CD4-positive, alpha-beta T cell (primary cell): ENCODE measurements at regions of chr12 and their contacts with region 1.

Region 1: DNA sequence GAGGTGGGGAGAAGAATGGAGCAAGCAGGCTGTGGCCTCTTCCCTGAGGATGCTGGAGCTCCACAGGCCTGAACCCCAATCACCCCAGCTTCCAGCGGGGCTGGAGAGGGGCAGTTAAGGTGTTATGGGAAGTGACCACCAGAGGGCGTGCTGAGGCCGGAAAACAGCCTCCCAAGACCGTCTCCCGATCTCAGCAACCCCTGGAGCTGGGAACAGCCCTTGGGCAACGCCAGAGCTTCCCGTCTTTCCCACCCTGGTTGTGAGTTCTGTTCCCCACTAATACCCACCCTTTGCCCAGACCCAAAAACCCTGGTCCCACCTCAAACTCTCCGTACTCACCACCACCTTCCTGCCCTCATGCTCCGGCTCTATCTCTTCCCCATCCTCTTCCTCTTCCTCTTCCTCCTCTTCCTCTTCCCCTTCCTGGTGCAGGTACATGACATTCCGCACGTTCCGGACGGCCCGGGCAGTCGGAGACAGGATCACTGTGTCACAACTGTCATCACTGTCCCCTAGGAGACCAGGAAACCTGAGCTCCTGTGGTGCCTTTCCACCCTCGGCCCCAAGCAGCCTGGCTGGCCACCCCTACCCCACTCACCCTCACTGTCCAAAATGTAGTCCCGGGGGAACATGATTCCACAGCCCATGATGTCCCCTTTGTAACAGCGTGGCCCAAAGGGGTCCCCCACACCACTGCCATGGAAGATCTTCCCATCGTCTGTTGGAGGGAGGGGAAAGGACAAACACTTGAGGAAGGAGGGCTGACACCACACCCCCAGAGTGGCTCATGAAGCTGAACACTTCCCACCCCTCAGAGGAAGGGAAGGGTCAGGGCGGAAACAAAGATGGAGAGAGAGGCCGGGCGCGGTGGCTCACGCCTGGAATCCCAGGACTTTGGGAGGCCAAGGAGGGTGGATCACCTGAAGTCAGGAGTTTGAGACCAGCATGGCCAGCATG is 12.9 kb downstream of the SPRYD3 start:
- DNase-seq: peak; percentile 49 to 84 (median 60)
- ATAC-seq: peak; percentile 69
- H3K4me3 ChIP-seq: no peak overlapping the region
- H3K4me3 Mint-ChIP-seq: no peak overlapping the region
- H3K27ac ChIP-seq: no peak overlapping the region
- H3K27ac Mint-ChIP-seq: no peak overlapping the region
- H3K4me1 ChIP-seq: peaks cover 11% of the 10 kb centered on the region
- H3K4me1 Mint-ChIP-seq: peaks cover 7% of the 10 kb centered on the region
- H3K27me3 ChIP-seq: no peaks in the 10 kb centered on the region
- H3K27me3 Mint-ChIP-seq: no peaks in the 10 kb centered on the region
- CTCF ChIP-seq: peak; percentile 93

Region 2: DNA sequence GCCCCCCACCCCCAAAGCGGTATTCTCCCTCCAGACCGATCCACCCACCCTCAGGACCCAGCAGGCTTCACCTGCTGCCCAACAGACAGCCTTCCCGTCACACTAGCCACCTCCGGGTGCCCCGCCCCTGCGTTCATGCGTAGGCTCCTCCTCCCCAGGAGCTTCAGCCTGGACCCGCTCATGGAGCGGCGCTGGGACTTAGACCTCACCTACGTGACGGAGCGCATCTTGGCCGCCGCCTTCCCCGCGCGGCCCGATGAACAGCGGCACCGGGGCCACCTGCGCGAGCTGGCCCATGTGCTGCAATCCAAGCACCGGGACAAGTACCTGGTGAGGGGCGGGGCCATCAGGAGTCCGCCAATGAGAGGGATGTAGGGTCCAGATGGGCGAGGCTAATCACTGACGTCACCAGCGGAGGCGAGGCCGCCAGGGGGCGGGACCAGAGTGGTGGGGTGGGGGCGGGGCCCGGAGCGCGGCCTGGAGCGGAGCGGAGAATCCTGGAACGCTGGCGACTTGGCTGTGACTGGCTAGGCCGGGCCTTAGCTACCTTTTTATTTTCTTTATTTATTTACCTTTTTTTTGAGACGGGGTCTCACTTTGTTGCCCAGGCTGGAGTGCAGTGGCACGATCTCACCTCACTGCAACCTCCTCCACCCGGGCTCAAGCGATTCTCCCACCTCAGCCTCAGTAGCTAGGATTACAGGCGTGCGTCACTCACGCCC is 12.0 kb before region 1 on chr12:
- CTCF ChIA-PET with region 1: interaction called, 28 read pairs
- POLR2A ChIA-PET with region 1: interaction called, 3 read pairs
- intact Hi-C with region 1: no loop called
- DNase-seq: peak; percentile 85 to 97 (median 91)
- ATAC-seq: peak; percentile 89
- H3K4me3 ChIP-seq: peak overlapping the region; percentile 85
- H3K4me3 Mint-ChIP-seq: peak overlapping the region; percentile 96
- H3K27ac ChIP-seq: peak overlapping the region; percentile 21 to 65
- H3K27ac Mint-ChIP-seq: peak overlapping the region; percentile 92
- H3K4me1 ChIP-seq: peaks cover 17% of the 10 kb centered on the region
- H3K4me1 Mint-ChIP-seq: peaks cover 15% of the 10 kb centered on the region
- H3K27me3 ChIP-seq: no peaks in the 10 kb centered on the region
- H3K27me3 Mint-ChIP-seq: no peaks in the 10 kb centered on the region
- CTCF ChIP-seq: no peak

Region 3: DNA sequence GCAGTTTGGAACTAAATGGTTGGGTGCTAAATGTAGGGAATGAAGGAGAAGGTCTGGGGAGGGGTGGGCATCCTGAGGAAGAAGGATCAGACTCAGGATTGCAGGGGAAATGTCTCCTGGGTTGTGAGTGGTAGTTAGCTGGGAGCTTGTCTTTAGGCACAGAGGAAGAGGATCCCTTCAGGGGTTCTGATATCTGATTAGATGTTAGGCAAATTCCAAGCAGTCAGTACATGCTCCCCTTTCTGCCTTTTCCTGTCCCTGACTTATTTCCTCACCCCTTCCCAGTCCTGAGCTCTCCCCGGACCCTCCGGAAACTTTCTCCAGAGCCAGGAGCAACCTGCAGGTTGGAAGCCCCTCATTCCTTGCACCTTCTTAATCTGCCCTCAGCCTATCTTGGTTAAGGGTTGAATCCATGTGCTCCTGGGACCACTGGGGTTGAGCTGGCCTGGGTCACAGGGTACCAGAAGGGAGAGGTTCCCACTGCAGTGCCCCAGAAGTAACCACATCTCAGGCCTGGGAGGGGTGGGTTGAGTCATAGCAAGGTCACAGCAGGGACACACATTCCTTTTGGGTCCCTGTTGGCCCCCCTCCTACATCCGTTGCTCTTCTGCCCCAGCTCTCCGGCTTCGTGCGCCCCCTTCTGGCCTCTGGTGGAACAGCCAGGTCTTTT is 32.9 kb after region 1 on chr12:
- CTCF ChIA-PET with region 1: interaction called, 114 read pairs
- POLR2A ChIA-PET with region 1: interaction called, 26 read pairs
- intact Hi-C with region 1: loop called (anchors 1 kb)
- DNase-seq: peak; percentile 82 to 94 (median 86)
- ATAC-seq: peak; percentile 73
- H3K4me3 ChIP-seq: no peak overlapping the region
- H3K4me3 Mint-ChIP-seq: peak overlapping the region; percentile 71
- H3K27ac ChIP-seq: no peak overlapping the region
- H3K27ac Mint-ChIP-seq: peak overlapping the region; percentile 4
- H3K4me1 ChIP-seq: peaks cover 63% of the 10 kb centered on the region
- H3K4me1 Mint-ChIP-seq: peaks cover 48% of the 10 kb centered on the region
- H3K27me3 ChIP-seq: peaks cover 0 to 11% of the 10 kb centered on the region in 2 experiments
- H3K27me3 Mint-ChIP-seq: peaks cover 5% of the 10 kb centered on the region
- CTCF ChIP-seq: peak; percentile 97

Region 4: GRCh38 chr12:53190108-53190729 is 124.0 kb after region 1 on chr12:
- CTCF ChIA-PET with region 1: no interaction called
- POLR2A ChIA-PET with region 1: no interaction called
- intact Hi-C with region 1: loop called in 1 of 2 experiments (anchors 10 kb)
- DNase-seq: peak in 13 of 14 experiments; percentile 33 to 78 (median 46)
- ATAC-seq: peak; percentile 98
- H3K4me3 ChIP-seq: no peak overlapping the region
- H3K4me3 Mint-ChIP-seq: no peak overlapping the region
- H3K27ac ChIP-seq: no peak overlapping the region
- H3K27ac Mint-ChIP-seq: peak overlapping the region; percentile 68
- H3K4me1 ChIP-seq: peaks cover 20% of the 10 kb centered on the region
- H3K4me1 Mint-ChIP-seq: peaks cover 32% of the 10 kb centered on the region
- H3K27me3 ChIP-seq: no peaks in the 10 kb centered on the region
- H3K27me3 Mint-ChIP-seq: no peaks in the 10 kb centered on the region
- CTCF ChIP-seq: peak; percentile 76

Region 5: GRCh38 chr12:53287741-53288216 is 221.5 kb after region 1 on chr12:
- CTCF ChIA-PET with region 1: no interaction called
- POLR2A ChIA-PET with region 1: no interaction called
- intact Hi-C with region 1: loop called in 1 of 2 experiments (anchors 5 kb)
- DNase-seq: peak; percentile 60 to 88 (median 70)
- ATAC-seq: peak; percentile 98
- H3K4me3 ChIP-seq: no peak overlapping the region
- H3K4me3 Mint-ChIP-seq: no peak overlapping the region
- H3K27ac ChIP-seq: no peak overlapping the region
- H3K27ac Mint-ChIP-seq: peak overlapping the region; percentile 0
- H3K4me1 ChIP-seq: peaks cover 6% of the 10 kb centered on the region
- H3K4me1 Mint-ChIP-seq: peaks cover 5% of the 10 kb centered on the region
- H3K27me3 ChIP-seq: no peaks in the 10 kb centered on the region
- H3K27me3 Mint-ChIP-seq: no peaks in the 10 kb centered on the region
- CTCF ChIP-seq: peak; percentile 81